PC-9 (cell line): ENCODE measurements at regions of chr18 and their contacts with region 1.

Region 1: DNA sequence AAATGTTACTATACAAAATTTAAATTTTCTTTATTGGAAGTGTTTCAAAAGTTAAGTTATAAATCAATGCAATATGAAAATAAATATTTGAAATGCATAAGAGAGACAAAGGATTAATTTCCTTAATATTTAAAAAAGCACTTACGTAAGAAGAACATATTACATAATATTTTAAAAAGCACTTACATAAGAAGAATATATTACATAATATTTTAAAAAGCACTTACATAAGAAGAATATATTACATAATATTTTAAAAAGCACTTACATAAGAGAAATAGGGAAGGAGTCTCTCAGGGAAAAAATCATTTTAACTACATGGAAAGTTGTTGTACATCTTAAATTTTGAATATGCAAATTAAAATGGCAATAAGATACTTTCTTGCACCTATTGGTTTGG is 17.4 kb upstream of the B4GALT6 start:
- DNase-seq: no peak
- H3K4me3 ChIP-seq: no peak overlapping the region
- H3K27ac ChIP-seq: no peak overlapping the region
- H3K4me1 ChIP-seq: no peaks in the 10 kb centered on the region
- H3K27me3 ChIP-seq: no peaks in the 10 kb centered on the region
- CTCF ChIP-seq: no peak

Region 2: GRCh38 chr18:32026491-32027086 is 324.8 kb after region 1 on chr18:
- CTCF ChIA-PET with region 1: interaction called, 13 read pairs
- POLR2A ChIA-PET with region 1: no interaction called
- intact Hi-C with region 1: no loop called
- DNase-seq: no peak
- H3K4me3 ChIP-seq: no peak overlapping the region
- H3K27ac ChIP-seq: no peak overlapping the region
- H3K4me1 ChIP-seq: no peaks in the 10 kb centered on the region
- H3K27me3 ChIP-seq: no peaks in the 10 kb centered on the region; the same call in 1 of the 2 replicates
- CTCF ChIP-seq: no peak